Calu3 (cell line): ENCODE measurements at regions of chr2 and their contacts with region 1.

Region 1: DNA sequence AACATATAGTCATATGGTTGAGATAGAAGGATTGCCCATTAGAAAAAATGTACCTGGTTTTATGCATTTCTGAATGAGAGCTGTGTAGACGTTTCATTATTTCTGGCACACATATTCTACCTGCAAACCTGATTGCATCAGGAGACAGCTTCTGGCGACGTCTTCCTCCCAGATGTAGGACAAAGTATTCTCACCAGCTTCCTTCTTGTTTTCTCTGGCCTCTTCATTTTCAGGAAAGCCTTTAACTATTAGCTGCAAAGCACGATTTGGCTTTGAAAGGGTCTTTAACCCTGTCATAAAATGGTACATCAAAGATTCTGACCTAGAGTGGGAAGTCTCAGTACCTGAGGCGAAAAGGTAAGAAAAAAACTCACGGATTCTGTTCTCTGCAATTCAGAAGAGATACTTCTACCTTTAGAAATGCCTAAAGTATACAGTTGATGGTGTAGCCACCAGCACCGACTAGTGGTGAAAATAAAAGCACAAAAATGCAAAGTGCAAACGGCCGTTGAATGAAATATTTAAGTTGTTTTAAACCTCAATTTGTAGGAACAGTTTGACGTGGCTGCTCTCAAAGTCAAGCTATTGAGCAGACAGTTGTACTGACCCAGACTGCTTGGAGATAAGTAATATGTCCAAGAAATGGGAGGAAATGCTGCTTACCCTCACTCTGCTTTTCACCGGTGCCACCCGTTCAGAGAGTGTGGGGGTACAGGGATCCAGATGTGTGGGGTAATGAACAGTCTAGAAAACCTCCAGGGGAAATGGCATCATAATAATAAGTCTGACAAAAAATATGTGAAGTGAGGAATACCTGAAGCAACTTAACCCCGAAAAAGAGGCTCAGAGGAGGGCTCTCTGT is 20.2 kb downstream of the IL18RAP start:
- DNase-seq: peak; percentile 16
- H3K4me3 Mint-ChIP-seq: no peak overlapping the region
- H3K27ac Mint-ChIP-seq: no peak overlapping the region
- H3K4me1 Mint-ChIP-seq: no peaks in the 10 kb centered on the region
- H3K27me3 Mint-ChIP-seq: no peaks in the 10 kb centered on the region
- CTCF ChIP-seq: peak; percentile 28

Region 2: DNA sequence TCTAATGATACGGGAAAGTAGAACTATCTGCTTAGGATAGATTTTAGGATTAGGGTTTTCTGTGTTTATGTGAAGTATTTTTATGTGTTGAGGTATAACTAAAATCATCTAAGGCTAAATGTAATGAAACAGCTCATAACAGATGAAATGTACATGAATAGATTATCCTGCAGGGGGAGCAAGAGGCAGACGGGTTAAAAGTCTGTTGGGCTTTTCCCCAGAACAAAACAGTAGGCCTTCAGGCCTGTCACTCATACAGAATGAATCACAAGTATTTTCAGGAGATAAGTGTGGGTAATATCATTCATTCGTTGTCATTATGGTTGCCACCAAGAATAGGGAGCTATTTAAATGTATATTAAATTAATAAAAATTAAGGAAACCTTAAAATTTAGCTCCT is 559.3 kb before region 1 on chr2:
- CTCF ChIA-PET with region 1: no interaction called
- intact Hi-C with region 1: loop called (anchors 5 kb)
- DNase-seq: peak; percentile 28
- H3K4me3 Mint-ChIP-seq: no peak overlapping the region
- H3K27ac Mint-ChIP-seq: no peak overlapping the region
- H3K4me1 Mint-ChIP-seq: no peaks in the 10 kb centered on the region
- H3K27me3 Mint-ChIP-seq: no peaks in the 10 kb centered on the region
- CTCF ChIP-seq: peak; percentile 44

Region 3: GRCh38 chr2:102005989-102006885 is 437.0 kb before region 1 on chr2:
- CTCF ChIA-PET with region 1: no interaction called
- intact Hi-C with region 1: no loop called
- DNase-seq: peak; percentile 56
- H3K4me3 Mint-ChIP-seq: no peak overlapping the region
- H3K27ac Mint-ChIP-seq: no peak overlapping the region
- H3K4me1 Mint-ChIP-seq: no peaks in the 10 kb centered on the region
- H3K27me3 Mint-ChIP-seq: no peaks in the 10 kb centered on the region
- CTCF ChIP-seq: peak; percentile 56

Region 4: DNA sequence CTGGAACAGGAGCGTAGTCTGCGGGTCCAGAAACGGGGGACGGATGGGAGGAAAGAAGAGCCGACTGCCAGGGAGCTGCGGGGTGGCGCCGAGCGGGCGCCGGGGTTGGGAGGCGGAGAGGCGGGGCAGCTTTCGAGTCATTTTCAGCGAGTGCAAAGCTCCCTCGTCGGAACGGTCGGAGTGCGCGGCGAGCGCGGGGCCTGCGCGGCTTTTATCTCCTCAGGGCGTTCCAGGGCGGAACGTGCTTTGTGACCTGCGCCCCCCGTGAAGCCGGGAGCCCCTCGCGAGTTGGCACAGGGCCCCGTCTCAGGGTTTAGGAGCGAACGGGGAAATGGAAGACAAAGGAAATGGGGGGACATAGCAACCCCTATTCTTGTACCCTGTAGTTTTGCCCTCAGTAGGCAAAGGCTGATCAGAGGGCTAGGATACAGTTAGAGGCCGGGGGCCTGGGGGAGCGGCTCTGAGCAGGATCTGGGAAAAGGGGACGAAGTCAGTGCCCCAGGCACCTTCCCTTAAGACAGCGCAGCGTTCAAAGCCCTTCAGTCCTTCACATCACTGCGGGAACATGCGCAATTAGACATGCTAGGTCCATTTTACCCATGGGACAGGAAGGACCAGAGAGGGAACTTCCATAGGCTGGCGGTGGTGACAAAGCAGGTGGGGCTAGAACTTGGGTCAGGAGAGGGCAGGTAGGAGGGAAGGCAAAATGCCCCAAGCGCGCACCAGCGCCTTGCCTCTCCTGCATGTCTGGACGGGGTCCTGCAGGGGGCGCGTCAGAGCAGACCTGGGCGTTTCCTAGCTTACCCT is 192.0 kb before region 1 on chr2:
- CTCF ChIA-PET with region 1: no interaction called
- intact Hi-C with region 1: loop called (anchors 1 kb)
- DNase-seq: peak; percentile 81
- H3K4me3 Mint-ChIP-seq: peak overlapping the region; percentile 75
- H3K27ac Mint-ChIP-seq: peak overlapping the region; percentile 22
- H3K4me1 Mint-ChIP-seq: peaks cover 19% of the 10 kb centered on the region
- H3K27me3 Mint-ChIP-seq: peaks cover 8% of the 10 kb centered on the region
- CTCF ChIP-seq: peak; percentile 81

Region 5: GRCh38 chr2:102703748-102704147 is 260.6 kb after region 1 on chr2:
- CTCF ChIA-PET with region 1: no interaction called
- intact Hi-C with region 1: loop called (anchors 10 kb)
- DNase-seq: peak; percentile 37
- H3K4me3 Mint-ChIP-seq: no peak overlapping the region
- H3K27ac Mint-ChIP-seq: no peak overlapping the region
- H3K4me1 Mint-ChIP-seq: peaks cover 8% of the 10 kb centered on the region
- H3K27me3 Mint-ChIP-seq: no peaks in the 10 kb centered on the region
- CTCF ChIP-seq: no peak